ENCODE measurements at regions of chr4 and their contacts with region 1.

Region 1: GRCh38 chr4:7546809-7547367 is 112.2 kb upstream of the PSAPL1 start:
- DNase-seq: peak; percentile 24
- H3K4me3 ChIP-seq: peak overlapping the region in 1 of 3 experiments; percentile 8
- H3K27ac ChIP-seq: peak overlapping the region; percentile 37
- H3K4me1 ChIP-seq: peaks cover 21% of the 10 kb centered on the region
- H3K27me3 ChIP-seq: no peaks in the 10 kb centered on the region
- CTCF ChIP-seq: no peak

Region 2: GRCh38 chr4:7581477-7581876 is 34.6 kb after region 1 on chr4:
- CTCF ChIA-PET with region 1: no interaction called
- dilution Hi-C with region 1: no loop called
- in situ Hi-C with region 1: no loop called
- intact Hi-C with region 1: no loop called
- DNase-seq: no peak
- H3K4me3 ChIP-seq: no peak overlapping the region
- H3K27ac ChIP-seq: no peak overlapping the region
- H3K4me1 ChIP-seq: no peaks in the 10 kb centered on the region
- H3K27me3 ChIP-seq: no peaks in the 10 kb centered on the region
- CTCF ChIP-seq: no peak

Region 3: GRCh38 chr4:7649741-7650531 is 103.0 kb after region 1 on chr4:
- CTCF ChIA-PET with region 1: no interaction called
- dilution Hi-C with region 1: no loop called
- in situ Hi-C with region 1: no loop called
- intact Hi-C with region 1: loop called (anchors 5 kb)
- DNase-seq: peak; percentile 82
- H3K4me3 ChIP-seq: no peak overlapping the region
- H3K27ac ChIP-seq: peak overlapping the region; percentile 33
- H3K4me1 ChIP-seq: peaks cover 51% of the 10 kb centered on the region
- H3K27me3 ChIP-seq: no peaks in the 10 kb centered on the region
- CTCF ChIP-seq: no peak

Region 4: GRCh38 chr4:7691982-7692381 is 145.1 kb after region 1 on chr4:
- CTCF ChIA-PET with region 1: no interaction called
- dilution Hi-C with region 1: no loop called
- in situ Hi-C with region 1: no loop called
- intact Hi-C with region 1: no loop called
- DNase-seq: no peak
- H3K4me3 ChIP-seq: no peak overlapping the region
- H3K27ac ChIP-seq: no peak overlapping the region
- H3K4me1 ChIP-seq: no peaks in the 10 kb centered on the region
- H3K27me3 ChIP-seq: no peaks in the 10 kb centered on the region
- CTCF ChIP-seq: no peak

Region 5: DNA sequence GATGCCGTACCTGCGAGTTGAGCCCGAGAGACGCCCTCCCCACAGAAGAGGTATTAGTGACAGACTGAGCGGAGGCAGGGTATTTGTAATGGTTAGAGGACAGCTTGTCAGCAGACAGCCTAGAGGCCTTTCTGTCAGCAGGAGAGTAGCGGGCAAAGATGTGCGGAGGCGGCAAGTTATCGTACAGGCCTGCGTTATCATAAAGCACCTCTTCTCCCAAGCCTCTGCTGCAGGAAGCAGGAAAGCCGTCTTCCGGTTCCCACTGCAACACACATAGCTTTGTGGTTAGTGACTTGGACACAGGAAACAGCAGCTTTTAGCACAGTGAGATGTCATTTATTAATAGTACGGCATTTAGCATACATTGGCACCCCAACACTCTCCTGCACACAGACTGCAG is 234.5 kb after region 1 on chr4:
- CTCF ChIA-PET with region 1: no interaction called
- dilution Hi-C with region 1: no loop called
- in situ Hi-C with region 1: no loop called
- intact Hi-C with region 1: no loop called
- DNase-seq: no peak
- H3K4me3 ChIP-seq: no peak overlapping the region
- H3K27ac ChIP-seq: no peak overlapping the region
- H3K4me1 ChIP-seq: no peaks in the 10 kb centered on the region
- H3K27me3 ChIP-seq: no peaks in the 10 kb centered on the region
- CTCF ChIP-seq: no peak